ENCODE measurements at regions of chr6 and their contacts with region 1.

Region 1: DNA sequence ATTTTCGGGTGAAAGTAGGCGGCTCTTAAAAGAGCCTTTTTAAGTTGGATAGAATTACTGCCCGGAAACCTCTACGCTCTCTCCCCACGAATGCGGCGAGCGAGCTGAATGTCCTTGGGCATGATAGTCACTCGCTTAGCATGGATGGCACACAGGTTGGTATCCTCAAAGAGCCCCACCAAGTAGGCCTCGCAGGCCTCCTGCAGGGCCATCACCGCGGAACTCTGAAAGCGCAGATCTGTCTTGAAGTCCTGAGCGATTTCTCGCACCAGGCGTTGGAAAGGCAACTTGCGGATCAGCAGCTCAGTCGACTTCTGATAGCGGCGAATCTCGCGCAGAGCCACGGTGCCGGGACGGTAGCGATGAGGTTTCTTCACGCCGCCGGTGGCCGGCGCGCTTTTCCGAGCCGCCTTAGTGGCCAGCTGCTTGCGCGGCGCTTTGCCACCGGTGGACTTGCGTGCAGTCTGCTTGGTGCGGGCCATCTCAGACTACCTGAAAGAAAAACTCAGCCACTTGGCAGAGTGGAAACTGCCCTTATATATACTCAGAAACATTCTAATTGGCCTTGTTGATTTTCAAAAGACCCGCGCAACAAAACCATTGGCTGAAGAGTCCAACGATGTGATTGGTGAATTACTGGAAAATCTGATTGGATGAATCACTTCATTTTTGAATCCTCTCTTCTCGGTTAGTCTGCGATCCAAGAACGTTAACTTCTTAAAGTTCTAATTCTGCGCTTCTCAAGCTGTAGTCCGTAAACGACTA is 93.9 kb upstream of the BTN3A2 start:
- DNase-seq: peak; percentile 52 to 93 (median 81)
- ATAC-seq: peak; percentile 18 to 39
- H3K4me3 Mint-ChIP-seq: no peak overlapping the region
- H3K27ac Mint-ChIP-seq: peak overlapping the region in 4 of 10 donors; percentile 20 to 97 (median 40)
- H3K4me1 Mint-ChIP-seq: peaks cover 4 to 28% (median 11%) of the 10 kb centered on the region in 4 donors
- H3K27me3 Mint-ChIP-seq: no peaks in the 10 kb centered on the region

Region 2: DNA sequence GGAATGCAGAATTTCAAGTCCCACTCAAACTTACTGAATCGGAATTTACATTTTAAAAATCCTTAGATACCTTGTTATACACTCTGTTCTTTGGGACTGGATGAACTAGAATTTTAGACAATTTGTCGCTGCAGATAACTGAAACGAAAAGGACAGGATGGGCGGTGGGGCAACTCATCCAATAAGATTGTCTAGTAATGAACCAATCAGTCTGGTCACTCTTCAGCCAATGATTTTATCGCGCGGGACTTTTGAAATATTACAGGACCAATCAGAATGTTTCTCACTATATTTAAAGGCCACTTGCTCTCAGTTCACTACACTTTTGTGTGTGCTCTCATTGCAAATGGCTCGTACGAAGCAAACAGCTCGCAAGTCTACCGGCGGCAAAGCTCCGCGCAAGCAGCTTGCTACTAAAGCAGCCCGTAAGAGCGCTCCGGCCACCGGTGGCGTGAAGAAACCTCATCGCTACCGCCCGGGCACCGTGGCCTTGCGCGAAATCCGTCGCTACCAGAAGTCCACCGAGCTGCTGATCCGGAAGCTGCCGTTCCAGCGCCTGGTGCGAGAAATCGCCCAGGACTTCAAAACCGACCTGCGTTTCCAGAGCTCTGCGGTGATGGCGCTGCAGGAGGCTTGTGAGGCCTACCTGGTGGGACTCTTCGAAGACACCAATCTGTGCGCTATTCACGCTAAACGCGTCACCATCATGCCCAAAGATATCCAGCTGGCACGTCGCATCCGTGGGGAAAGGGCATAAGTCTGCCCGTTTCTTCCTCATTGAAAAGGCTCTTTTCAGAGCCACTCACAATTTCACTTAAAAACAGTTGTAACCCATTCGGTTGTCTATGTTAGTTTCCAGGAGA is 225.8 kb before region 1 on chr6:
- POLR2A ChIA-PET with region 1: interaction called, 22 read pairs
- DNase-seq: peak; percentile 45 to 95 (median 86)
- ATAC-seq: peak; percentile 58 to 63
- H3K4me3 Mint-ChIP-seq: peak overlapping the region; percentile 90 to 97 (median 92)
- H3K27ac Mint-ChIP-seq: peak overlapping the region; percentile 90 to 99 (median 96)
- H3K4me1 Mint-ChIP-seq: peaks cover 8 to 28% (median 14%) of the 10 kb centered on the region in 4 donors
- H3K27me3 Mint-ChIP-seq: no peaks in the 10 kb centered on the region

Region 3: DNA sequence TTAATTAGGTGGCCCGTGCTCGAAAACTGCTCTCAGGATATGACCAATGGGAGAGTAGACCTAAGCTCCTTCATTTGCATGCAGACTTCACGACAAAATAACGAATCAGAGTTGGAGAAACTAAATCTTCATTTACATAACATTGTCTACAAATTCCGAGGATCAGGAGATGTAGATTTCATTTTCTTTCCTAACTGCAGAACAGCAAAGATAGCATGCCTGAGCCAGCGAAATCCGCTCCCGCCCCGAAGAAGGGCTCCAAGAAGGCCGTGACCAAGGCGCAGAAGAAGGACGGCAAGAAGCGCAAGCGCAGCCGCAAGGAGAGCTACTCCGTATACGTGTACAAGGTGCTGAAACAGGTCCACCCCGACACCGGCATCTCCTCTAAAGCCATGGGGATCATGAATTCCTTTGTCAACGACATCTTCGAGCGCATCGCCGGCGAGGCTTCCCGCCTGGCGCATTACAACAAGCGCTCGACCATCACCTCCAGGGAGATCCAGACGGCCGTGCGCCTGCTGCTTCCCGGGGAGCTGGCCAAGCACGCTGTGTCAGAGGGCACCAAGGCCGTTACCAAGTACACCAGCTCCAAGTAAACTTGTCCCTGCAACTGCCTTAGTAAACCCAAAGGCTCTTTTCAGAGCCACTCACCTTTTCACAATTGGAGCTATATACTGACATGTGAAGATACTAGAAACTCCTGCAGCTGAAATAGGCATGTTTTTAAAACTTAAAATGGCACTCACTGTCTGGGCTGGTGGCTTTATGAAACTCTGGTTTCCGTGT is 87.3 kb before region 1 on chr6:
- POLR2A ChIA-PET with region 1: interaction called, 52 read pairs
- DNase-seq: peak; percentile 22 to 82 (median 58)
- ATAC-seq: peak; percentile 92 to 94
- H3K4me3 Mint-ChIP-seq: peak overlapping the region; percentile 93 to 100 (median 98)
- H3K27ac Mint-ChIP-seq: peak overlapping the region; percentile 70 to 98 (median 95)
- H3K4me1 Mint-ChIP-seq: peaks cover 27 to 48% (median 46%) of the 10 kb centered on the region in 4 donors
- H3K27me3 Mint-ChIP-seq: no peaks in the 10 kb centered on the region

Region 4: DNA sequence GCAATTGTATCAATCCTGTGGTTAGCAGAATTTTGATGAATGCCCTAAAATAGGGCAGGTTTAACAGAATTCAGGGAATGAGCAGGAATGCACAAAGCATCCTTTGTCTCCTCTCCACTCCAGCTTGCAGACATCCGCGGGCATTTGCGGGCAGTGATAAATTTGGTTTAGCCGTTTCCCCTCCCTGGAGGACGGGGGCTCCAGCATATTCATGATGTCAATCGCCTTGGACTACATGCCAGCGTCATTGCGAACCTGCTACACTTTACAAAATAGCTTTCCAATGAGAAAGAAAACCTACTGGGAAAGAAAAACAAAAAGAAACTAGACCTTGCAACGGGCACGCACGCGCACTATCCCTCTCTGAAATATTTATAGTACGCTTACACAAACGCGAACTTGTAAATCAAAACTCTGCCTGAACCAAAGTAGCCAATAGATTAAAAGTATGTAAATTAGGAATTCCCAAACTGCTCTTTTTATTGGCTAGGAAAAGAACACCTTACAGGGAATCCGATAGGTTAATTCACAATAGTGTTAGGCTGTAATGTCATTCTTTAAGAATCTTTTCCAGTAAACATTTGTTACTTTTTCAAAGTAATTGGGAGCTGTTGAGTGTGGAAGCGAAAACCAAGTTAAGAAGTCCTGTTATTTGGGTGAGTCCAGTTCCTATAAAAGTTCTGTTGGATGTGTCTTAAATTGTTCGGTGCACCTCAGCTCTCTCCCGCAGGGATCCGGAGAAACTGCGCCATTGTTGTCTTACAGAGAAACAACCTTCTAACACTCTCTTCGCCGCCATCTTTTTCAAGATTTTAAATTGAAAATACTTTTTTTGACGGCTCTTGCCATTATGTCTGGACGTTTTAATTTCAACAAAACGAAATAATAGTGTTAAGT is 47.2 kb before region 1 on chr6:
- POLR2A ChIA-PET with region 1: interaction called, 75 read pairs
- DNase-seq: peak; percentile 54 to 85 (median 71)
- ATAC-seq: peak; percentile 89 to 90
- H3K4me3 Mint-ChIP-seq: no peak overlapping the region
- H3K27ac Mint-ChIP-seq: no peak overlapping the region
- H3K4me1 Mint-ChIP-seq: peaks cover 4 to 25% (median 14%) of the 10 kb centered on the region in 4 donors
- H3K27me3 Mint-ChIP-seq: no peaks in the 10 kb centered on the region

Region 5: GRCh38 chr6:26285143-26286134 is 14.4 kb after region 1 on chr6:
- POLR2A ChIA-PET with region 1: interaction called, 271 read pairs
- DNase-seq: peak; percentile 80 to 99 (median 93)
- ATAC-seq: peak; percentile 77 to 87
- H3K4me3 Mint-ChIP-seq: peak overlapping the region; percentile 84 to 96 (median 91)
- H3K27ac Mint-ChIP-seq: peak overlapping the region; percentile 95 to 100 (median 98)
- H3K4me1 Mint-ChIP-seq: peaks cover 19 to 36% (median 29%) of the 10 kb centered on the region in 4 donors
- H3K27me3 Mint-ChIP-seq: peaks cover 0 to 7% (median 0%) of the 10 kb centered on the region in 5 donors

Region 6: GRCh38 chr6:26537846-26538571 is 266.9 kb after region 1 on chr6 and contains the start of gene HMGN4:
- POLR2A ChIA-PET with region 1: interaction called, 16 read pairs
- DNase-seq: peak; percentile 62 to 98 (median 90)
- ATAC-seq: peak; percentile 70 to 74
- H3K4me3 Mint-ChIP-seq: peak within 1 kb of the TSS; percentile 89 to 99 (median 97)
- H3K27ac Mint-ChIP-seq: peak within 1 kb of the TSS; percentile 91 to 100 (median 98)
- H3K4me1 Mint-ChIP-seq: peaks cover 32 to 72% (median 65%) of the 10 kb centered on the region in 4 donors
- H3K27me3 Mint-ChIP-seq: peaks cover 0 to 10% (median 0%) of the 10 kb centered on the region in 5 donors
- polyA plus RNA-seq, gene HMGN4: 110 to 183 (median 151) TPM

Region 7: DNA sequence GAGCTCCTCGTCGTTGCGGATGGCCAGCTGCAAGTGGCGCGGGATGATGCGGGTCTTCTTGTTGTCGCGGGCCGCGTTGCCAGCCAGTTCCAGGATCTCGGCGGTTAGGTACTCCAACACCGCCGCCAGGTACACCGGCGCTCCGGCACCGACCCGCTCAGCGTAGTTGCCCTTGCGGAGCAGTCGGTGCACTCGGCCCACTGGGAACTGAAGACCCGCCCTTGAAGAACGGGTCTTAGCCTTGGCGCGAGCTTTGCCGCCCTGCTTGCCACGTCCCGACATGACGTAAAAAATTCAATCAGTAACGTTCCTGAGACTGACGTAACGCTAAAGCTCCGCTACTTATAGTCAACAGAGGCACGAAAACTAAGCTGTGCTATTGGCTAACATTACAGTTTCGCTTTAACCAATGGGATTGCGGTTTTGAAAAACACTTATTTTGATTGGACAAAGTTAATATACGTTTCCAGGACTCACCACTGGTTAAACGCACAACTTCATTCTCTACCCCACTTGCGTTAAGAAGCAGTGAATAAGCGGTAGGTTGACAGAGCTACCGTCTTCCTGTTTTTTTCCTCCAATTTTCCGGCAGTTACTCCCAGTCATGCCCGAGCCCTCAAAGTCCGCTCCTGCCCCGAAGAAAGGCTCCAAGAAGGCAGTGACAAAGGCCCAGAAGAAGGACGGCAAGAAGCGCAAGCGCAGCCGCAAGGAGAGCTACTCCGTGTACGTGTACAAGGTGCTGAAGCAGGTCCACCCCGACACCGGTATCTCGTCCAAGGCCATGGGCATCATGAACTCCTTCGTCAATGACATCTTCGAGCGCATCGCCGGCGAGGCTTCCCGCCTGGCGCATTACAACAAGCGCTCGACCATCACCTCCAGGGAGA is 1567.2 kb after region 1 on chr6:
- POLR2A ChIA-PET with region 1: interaction called, 24 read pairs
- DNase-seq: peak; percentile 63 to 95 (median 88)
- ATAC-seq: peak; percentile 78 to 81
- H3K4me3 Mint-ChIP-seq: no peak overlapping the region
- H3K27ac Mint-ChIP-seq: no peak overlapping the region
- H3K4me1 Mint-ChIP-seq: peaks cover 8 to 36% (median 18%) of the 10 kb centered on the region in 4 donors
- H3K27me3 Mint-ChIP-seq: peaks cover 0 to 8% (median 0%) of the 10 kb centered on the region in 5 donors